ENCODE measurements at regions of chr13 and their contacts with region 1.

Region 1: DNA sequence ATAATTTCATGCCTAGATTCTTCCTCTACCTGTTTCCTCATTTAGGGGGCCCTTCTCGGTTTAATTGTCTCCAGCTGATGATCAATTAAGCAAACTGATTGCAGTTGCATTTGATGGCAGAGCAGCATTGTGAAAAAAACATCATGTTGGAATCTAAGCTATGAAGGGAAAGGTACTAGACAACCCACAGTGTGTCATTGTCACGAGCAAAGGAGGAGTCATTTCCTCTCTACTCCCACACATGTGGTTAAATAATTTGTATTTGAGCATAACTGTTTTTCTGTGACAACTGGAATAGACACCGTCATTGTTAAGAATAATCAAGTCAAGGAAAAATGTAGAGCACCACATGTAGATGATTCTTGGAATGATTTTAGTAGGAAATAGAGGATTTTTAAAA is 240.3 kb downstream of the DCT start:
- DNase-seq: peak; percentile 23
- ATAC-seq: peak; percentile 68
- H3K4me3 Mint-ChIP-seq: no peak overlapping the region
- H3K27ac Mint-ChIP-seq: no peak overlapping the region
- H3K4me1 Mint-ChIP-seq: peaks cover 40% of the 10 kb centered on the region
- H3K27me3 Mint-ChIP-seq: no peaks in the 10 kb centered on the region

Region 2: DNA sequence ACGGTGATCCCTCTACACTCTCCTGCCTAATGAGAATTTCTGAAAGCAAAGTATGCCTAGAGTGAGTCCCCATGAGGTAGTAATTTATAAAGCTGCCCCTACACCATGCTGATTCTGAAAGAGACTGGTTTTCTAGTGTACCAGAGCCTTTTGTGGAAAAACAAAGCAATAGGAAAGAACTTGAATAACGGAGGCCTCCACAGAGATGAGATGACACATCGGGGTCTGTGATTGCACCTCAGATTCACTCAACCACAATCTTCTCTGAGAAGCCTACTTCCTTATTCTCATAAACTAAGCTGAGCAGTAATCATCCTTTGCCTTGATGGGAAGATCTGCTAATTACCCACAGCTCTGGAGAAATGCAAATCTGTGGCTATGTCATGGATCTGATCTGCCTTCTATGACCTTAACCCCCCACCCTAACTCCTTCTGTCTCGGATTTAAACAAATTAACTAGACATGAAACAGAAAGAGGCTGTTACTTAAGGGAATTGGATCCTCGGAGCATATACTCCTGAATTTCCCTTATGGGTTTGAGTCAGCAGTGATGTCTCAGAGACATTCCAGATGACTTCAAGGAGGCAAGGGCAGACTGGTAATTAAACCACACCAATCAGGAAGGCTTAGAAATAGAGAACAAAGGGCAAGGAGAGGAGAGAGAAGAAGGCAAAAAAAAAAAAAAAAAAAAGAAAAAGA is 112.3 kb after region 1 on chr13:
- CTCF ChIA-PET with region 1: no interaction called
- POLR2A ChIA-PET with region 1: no interaction called
- intact Hi-C with region 1: loop called in 1 of 2 experiments (anchors 5 kb)
- DNase-seq: peak; percentile 34
- ATAC-seq: peak; percentile 73
- H3K4me3 Mint-ChIP-seq: no peak overlapping the region
- H3K27ac Mint-ChIP-seq: peak overlapping the region; percentile 59
- H3K4me1 Mint-ChIP-seq: peaks cover 26% of the 10 kb centered on the region
- H3K27me3 Mint-ChIP-seq: peaks cover 7% of the 10 kb centered on the region

Region 3: GRCh38 chr13:94632227-94632980 is 393.3 kb after region 1 on chr13:
- CTCF ChIA-PET with region 1: no interaction called
- POLR2A ChIA-PET with region 1: no interaction called
- intact Hi-C with region 1: no loop called
- DNase-seq: no peak
- ATAC-seq: no peak
- H3K4me3 Mint-ChIP-seq: no peak overlapping the region
- H3K27ac Mint-ChIP-seq: no peak overlapping the region
- H3K4me1 Mint-ChIP-seq: peaks cover 8% of the 10 kb centered on the region
- H3K27me3 Mint-ChIP-seq: no peaks in the 10 kb centered on the region

Measured in activated CD4-positive, alpha-beta T cell treated with anti-CD3 and anti-CD28 coated beads for 36 hours (primary cell).